K562 (cell line): ENCODE measurements at regions of chr11 and their contacts with region 1.

Region 1: DNA sequence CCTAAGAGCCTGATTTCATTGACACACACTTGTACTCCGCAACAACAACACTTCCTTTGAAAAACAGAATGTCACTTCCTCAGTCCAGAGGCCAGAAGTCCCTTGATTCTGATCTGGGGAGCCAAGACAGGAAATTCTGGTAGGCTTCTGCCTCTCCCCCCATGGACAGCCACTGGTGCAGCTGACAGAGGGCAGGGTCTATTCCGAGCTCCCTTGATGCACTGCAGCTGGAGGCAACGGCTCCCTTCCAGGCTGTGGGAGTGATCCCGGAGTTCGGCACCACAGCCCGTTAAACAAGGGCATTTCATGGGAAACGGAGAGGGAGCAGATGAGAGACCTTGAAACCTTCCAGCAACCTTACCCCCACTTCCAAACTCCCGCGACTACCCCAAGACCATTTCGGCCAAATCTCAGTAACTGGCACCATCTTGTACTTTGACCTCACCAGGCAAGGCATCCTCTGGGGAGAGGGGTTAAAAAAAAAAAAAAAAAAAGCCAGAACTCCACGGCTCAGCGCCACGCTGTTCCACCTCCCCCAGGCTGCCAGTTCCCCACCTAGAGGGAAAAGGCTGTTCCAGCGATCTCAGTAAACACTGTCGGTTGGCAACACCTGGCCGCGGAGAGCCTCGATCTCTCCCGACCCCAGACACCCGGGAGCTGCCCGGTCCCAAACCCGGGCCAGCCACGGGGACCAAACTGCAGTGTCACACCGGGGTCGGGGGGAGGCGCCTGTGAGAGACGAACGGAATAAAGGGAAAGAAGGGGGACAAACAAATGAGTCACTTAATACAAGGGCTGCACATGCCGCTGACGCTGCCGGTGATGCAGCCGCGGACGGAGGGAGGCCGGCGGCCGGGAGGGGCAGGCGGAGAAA is 1.1 kb downstream of the GAB2 start:
- DNase-seq: peak; percentile 80 to 91 (median 82)
- ATAC-seq: peak; percentile 74
- H3K4me3 ChIP-seq: peak overlapping the region; percentile 69
- H3K27ac ChIP-seq: peak overlapping the region; percentile 89
- H3K4me1 ChIP-seq: peaks cover 23 to 41% of the 10 kb centered on the region in 2 experiments
- H3K27me3 ChIP-seq: no peaks in the 10 kb centered on the region
- CTCF ChIP-seq: peak; percentile 50 to 68 (median 63)
- EP300 ChIP-seq: peak; percentile 54; the same call in 1 of the 2 replicates
- POLR2A ChIP-seq: peak; percentile 76
- RAD21 ChIP-seq: peak in 1 of 2 experiments; percentile 45; a peak in 3 of 4 replicates

Region 2: DNA sequence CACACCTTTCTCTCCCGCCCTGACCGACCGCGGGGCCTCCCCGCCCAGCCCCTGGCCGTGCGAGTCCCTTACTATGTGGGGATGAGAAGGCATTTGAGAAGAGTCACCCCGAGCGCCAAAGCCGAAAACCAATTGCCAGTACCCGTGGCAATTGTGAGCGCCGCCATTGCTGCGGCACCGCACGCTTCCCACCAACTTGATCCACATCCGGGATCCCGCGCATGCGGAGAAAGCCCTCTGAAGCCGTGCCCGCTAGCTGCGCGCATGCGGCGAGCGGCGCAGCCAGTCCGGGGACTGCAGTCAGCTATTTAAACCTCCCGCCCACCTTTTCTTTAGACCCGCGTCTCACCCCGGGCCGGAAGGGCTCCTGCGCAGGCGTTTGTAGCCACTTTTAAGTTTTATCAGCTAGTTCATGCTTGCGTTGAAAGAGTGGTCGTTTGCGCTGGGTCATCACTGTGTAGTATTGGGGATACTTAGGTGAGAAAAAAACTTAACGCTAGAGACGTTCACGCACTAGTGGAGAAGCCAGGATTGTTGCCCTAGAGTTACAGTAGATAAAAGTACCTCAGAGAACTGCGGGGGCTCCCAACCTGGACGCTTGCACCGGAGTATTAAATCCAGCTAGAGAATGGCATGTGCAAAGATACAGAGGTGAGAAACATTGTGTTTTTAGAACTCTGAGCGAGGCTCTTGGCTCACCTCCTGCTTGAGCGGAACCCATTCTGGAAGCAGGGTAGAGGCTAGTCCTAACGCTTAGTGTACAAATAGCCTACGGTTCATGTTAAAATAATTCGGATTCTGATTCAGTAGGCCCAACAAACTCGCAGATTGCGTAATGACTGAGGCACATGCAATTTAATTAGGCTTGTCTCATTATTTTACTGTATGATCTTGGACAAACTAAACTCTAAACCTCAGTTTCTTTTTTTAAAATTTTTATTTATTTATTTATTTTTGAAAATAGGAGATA is 276.8 kb before region 1 on chr11 and contains the start of gene ALG8:
- CTCF ChIA-PET with region 1: no interaction called
- POLR2A ChIA-PET with region 1: no interaction called
- in situ Hi-C with region 1: no loop called
- intact Hi-C with region 1: loop called (anchors 5 kb)
- DNase-seq: peak; percentile 98 to 99 (median 98)
- ATAC-seq: peak; percentile 96
- H3K4me3 ChIP-seq: peak within 1 kb of the TSS; percentile 59
- H3K27ac ChIP-seq: peak within 1 kb of the TSS; percentile 91
- H3K4me1 ChIP-seq: peaks cover 15 to 17% of the 10 kb centered on the region in 2 experiments; a peak in 4 of 5 replicates
- H3K27me3 ChIP-seq: no peaks in the 10 kb centered on the region
- CTCF ChIP-seq: no peak
- EP300 ChIP-seq: peak; percentile 36; the same call in 1 of the 2 replicates
- POLR2A ChIP-seq: peak; percentile 94
- RAD21 ChIP-seq: no peak
- polyA plus RNA-seq, gene ALG8: 176 to 189 TPM

Region 3: GRCh38 chr11:78350646-78351165 is 65.8 kb before region 1 on chr11:
- CTCF ChIA-PET with region 1: no interaction called
- POLR2A ChIA-PET with region 1: interaction called, 4 read pairs
- in situ Hi-C with region 1: no loop called
- intact Hi-C with region 1: loop called (anchors 2 kb)
- DNase-seq: peak in 1 of 4 experiments; percentile 40
- ATAC-seq: peak; percentile 9
- H3K4me3 ChIP-seq: peak overlapping the region; percentile 21; the same call in 1 of the 2 replicates
- H3K27ac ChIP-seq: peak overlapping the region; percentile 84
- H3K4me1 ChIP-seq: peaks cover 12 to 82% of the 10 kb centered on the region in 2 experiments
- H3K27me3 ChIP-seq: no peaks in the 10 kb centered on the region
- CTCF ChIP-seq: no peak
- EP300 ChIP-seq: no peak
- POLR2A ChIP-seq: no peak
- RAD21 ChIP-seq: 0 out of 4 replicates have a peak, but pooled peaks of 1 of the 2 experiments have one; percentile 6

Region 4: GRCh38 chr11:78432058-78432515 is 15.5 kb after region 1 on chr11:
- CTCF ChIA-PET with region 1: no interaction called
- POLR2A ChIA-PET with region 1: interaction called, 13 read pairs
- in situ Hi-C with region 1: no loop called
- intact Hi-C with region 1: no loop called
- DNase-seq: peak in 1 of 4 experiments; percentile 44
- ATAC-seq: peak; percentile 64
- H3K4me3 ChIP-seq: no peak overlapping the region
- H3K27ac ChIP-seq: no peak overlapping the region
- H3K4me1 ChIP-seq: peaks cover 14 to 28% of the 10 kb centered on the region in 2 experiments; a peak in 4 of 5 replicates
- H3K27me3 ChIP-seq: no peaks in the 10 kb centered on the region
- CTCF ChIP-seq: peak; percentile 43 to 58 (median 54)
- EP300 ChIP-seq: no peak
- POLR2A ChIP-seq: no peak
- RAD21 ChIP-seq: peak; percentile 45

Region 5: GRCh38 chr11:78564490-78565467 is 148.2 kb after region 1 on chr11:
- CTCF ChIA-PET with region 1: interaction called, 3 read pairs
- POLR2A ChIA-PET with region 1: no interaction called
- in situ Hi-C with region 1: no loop called
- intact Hi-C with region 1: loop called (anchors 2 kb)
- DNase-seq: peak; percentile 33 to 73 (median 38)
- ATAC-seq: peak; percentile 88
- H3K4me3 ChIP-seq: no peak overlapping the region
- H3K27ac ChIP-seq: peak overlapping the region; percentile 23; the same call in 1 of the 3 replicates
- H3K4me1 ChIP-seq: peaks cover 0 to 3% of the 10 kb centered on the region in 2 experiments; a peak in 1 of 5 replicates
- H3K27me3 ChIP-seq: no peaks in the 10 kb centered on the region
- CTCF ChIP-seq: peak; percentile 40 to 83 (median 53); a peak in 4 of 6 replicates
- EP300 ChIP-seq: no peak
- POLR2A ChIP-seq: no peak
- RAD21 ChIP-seq: peak; percentile 78 to 87